T-cell (primary cell): ENCODE measurements at regions of chr13 and their contacts with region 1.

Region 1: DNA sequence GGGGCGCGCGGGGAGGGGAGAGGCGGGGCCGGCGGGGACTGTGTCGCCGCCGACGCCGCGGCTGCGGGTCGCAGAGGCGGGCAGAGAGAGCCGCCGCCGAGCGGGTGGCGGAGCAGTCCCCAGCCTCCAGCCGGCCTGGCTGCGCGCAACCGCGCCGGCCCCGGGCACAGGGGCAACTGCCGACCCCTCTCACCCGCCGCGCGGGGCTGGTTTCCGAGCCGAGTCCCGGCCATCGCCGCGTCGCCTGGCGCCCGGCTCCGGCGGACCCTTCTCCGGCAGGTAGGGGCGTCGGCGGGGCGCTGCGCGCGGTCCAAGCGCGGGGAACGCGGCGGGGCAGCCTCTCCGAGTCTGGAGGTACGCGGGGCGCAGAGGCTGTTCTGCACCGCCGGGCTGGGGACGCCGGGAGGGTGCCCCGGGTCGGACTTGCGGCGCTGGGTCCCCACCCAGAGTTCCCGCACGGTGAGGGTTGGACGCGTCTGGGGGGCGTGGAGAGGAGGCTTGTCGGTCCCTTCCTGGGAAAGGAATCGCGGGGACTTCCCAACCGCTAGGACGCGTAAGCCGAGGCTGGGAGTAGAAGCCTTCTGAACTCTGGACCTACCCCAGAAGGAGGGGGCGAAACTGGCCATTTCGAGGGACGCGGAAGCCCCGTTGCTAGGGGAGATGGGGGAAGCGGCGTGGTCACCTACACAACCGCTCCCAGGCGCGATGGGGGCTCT is 133.6 kb upstream of the MYO16 start:
- DNase-seq: peak in 1 of 35 experiments; percentile 1
- ATAC-seq: peak; percentile 36 to 59 (median 46)
- H3K4me3 ChIP-seq: peak overlapping the region; percentile 48 to 85
- H3K4me3 Mint-ChIP-seq: peak overlapping the region; percentile 76 to 93 (median 80)
- H3K27ac ChIP-seq: no peak overlapping the region
- H3K27ac Mint-ChIP-seq: peak overlapping the region in 1 of 2 donors; percentile 27
- H3K4me1 ChIP-seq: peaks cover 0 to 16% of the 10 kb centered on the region in 2 experiments
- H3K4me1 Mint-ChIP-seq: peaks cover 13 to 21% (median 21%) of the 10 kb centered on the region in 3 donors
- H3K27me3 ChIP-seq: peaks cover 17 to 32% of the 10 kb centered on the region in 2 experiments
- H3K27me3 Mint-ChIP-seq: peaks cover 29 to 46% of the 10 kb centered on the region in 2 donors

Region 2: GRCh38 chr13:108113407-108113806 is 382.4 kb before region 1 on chr13:
- CTCF ChIA-PET with region 1: no interaction called
- POLR2A ChIA-PET with region 1: no interaction called
- DNase-seq: no peak
- ATAC-seq: no peak
- H3K4me3 ChIP-seq: no peak overlapping the region
- H3K4me3 Mint-ChIP-seq: no peak overlapping the region
- H3K27ac ChIP-seq: no peak overlapping the region
- H3K27ac Mint-ChIP-seq: no peak overlapping the region
- H3K4me1 ChIP-seq: no peaks in the 10 kb centered on the region
- H3K4me1 Mint-ChIP-seq: no peaks in the 10 kb centered on the region
- H3K27me3 ChIP-seq: no peaks in the 10 kb centered on the region
- H3K27me3 Mint-ChIP-seq: peaks cover 0 to 9% of the 10 kb centered on the region in 2 donors

Region 3: GRCh38 chr13:108155185-108156106 is 340.4 kb before region 1 on chr13:
- CTCF ChIA-PET with region 1: interaction called in 1 of 2 experiments, 10 read pairs
- POLR2A ChIA-PET with region 1: no interaction called
- DNase-seq: peak in 32 of 35 experiments; percentile 6 to 66 (median 35)
- ATAC-seq: no peak
- H3K4me3 ChIP-seq: no peak overlapping the region
- H3K4me3 Mint-ChIP-seq: no peak overlapping the region
- H3K27ac ChIP-seq: no peak overlapping the region
- H3K27ac Mint-ChIP-seq: no peak overlapping the region
- H3K4me1 ChIP-seq: no peaks in the 10 kb centered on the region
- H3K4me1 Mint-ChIP-seq: no peaks in the 10 kb centered on the region
- H3K27me3 ChIP-seq: peaks cover 0 to 3% of the 10 kb centered on the region in 2 experiments
- H3K27me3 Mint-ChIP-seq: peaks cover 9 to 19% of the 10 kb centered on the region in 2 donors

Region 4: DNA sequence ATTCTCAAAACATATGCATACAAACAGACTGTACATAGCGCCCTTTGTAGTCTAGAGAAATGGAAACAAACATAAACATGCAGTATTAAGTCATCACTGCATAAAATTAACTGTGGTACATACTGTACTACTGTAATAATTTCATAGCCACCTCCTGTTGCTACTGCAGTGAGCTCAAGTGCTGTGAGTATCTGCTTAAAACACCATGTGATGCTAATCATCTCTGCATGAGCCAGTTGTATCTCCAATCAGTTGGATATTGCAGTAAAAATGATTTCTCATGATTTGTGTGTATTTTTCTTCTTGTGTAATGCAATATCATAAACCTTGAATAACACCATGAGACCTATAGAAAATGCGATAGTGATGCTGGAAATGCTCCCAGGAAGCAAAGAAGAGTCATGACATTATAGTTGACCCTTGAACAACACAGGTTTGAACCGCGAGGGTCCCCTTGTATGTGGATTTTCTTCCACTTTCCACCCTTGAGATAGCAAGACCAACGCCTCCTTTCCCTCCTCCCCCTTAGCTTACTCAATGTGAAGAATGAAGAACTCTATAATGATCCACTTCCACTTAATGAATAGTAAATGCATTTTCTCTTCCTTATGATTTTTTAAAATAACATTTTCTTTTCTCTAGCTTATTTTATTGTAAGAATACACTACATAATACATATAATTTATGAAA is 222.2 kb before region 1 on chr13:
- CTCF ChIA-PET with region 1: no interaction called
- POLR2A ChIA-PET with region 1: interaction called in 1 of 2 experiments, 10 read pairs
- DNase-seq: no peak
- ATAC-seq: no peak
- H3K4me3 ChIP-seq: no peak overlapping the region
- H3K4me3 Mint-ChIP-seq: no peak overlapping the region
- H3K27ac ChIP-seq: no peak overlapping the region
- H3K27ac Mint-ChIP-seq: no peak overlapping the region
- H3K4me1 ChIP-seq: peaks cover 16 to 17% of the 10 kb centered on the region in 2 experiments
- H3K4me1 Mint-ChIP-seq: peaks cover 27 to 37% (median 30%) of the 10 kb centered on the region in 3 donors
- H3K27me3 ChIP-seq: no peaks in the 10 kb centered on the region
- H3K27me3 Mint-ChIP-seq: no peaks in the 10 kb centered on the region